Right cardiac atrium (tissue), 5 donors: ENCODE measurements at regions of chr14 and their contacts with region 1.

Region 1: GRCh38 chr14:41137741-41138140 is 468.9 kb upstream of the LRFN5 start:
- DNase-seq: no peak
- ATAC-seq: no peak
- H3K4me3 ChIP-seq: no peak overlapping the region
- H3K27ac ChIP-seq: no peak overlapping the region
- H3K4me1 ChIP-seq: no peaks in the 10 kb centered on the region
- H3K27me3 ChIP-seq: no peaks in the 10 kb centered on the region

Region 2: GRCh38 chr14:41201721-41202120 is 64.0 kb after region 1 on chr14:
- intact Hi-C with region 1: loop called in 1 of 4 experiments (anchors 2 kb)
- DNase-seq: no peak
- ATAC-seq: no peak
- H3K4me3 ChIP-seq: no peak overlapping the region
- H3K27ac ChIP-seq: no peak overlapping the region
- H3K4me1 ChIP-seq: no peaks in the 10 kb centered on the region
- H3K27me3 ChIP-seq: no peaks in the 10 kb centered on the region

Region 3: DNA sequence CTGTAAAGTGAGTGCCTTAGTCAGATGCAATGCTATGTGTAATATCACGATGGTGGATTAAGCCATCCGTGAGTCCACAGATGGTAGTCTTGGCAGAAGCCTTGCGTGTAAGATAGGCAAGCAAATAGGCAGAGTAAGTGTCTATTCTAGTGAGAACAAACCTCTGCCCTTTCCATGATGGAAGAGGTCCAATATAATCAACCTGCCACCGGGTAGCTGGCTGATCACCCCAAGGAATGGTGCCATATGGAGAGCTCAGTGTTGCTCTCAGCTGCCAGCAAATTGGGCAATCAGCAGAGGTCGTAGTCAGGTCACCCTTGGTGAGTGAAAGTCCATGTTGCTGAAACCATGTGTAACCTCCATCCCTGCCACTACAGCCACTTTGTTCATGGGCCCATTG is 97.7 kb after region 1 on chr14:
- intact Hi-C with region 1: no loop called
- DNase-seq: peak in 2 of 3 donors; percentile 4 to 18
- ATAC-seq: no peak
- H3K4me3 ChIP-seq: no peak overlapping the region
- H3K27ac ChIP-seq: no peak overlapping the region
- H3K4me1 ChIP-seq: no peaks in the 10 kb centered on the region
- H3K27me3 ChIP-seq: no peaks in the 10 kb centered on the region